ENCODE measurements at regions of chr20 and their contacts with region 1.

Region 1: GRCh38 chr20:44609511-44610312 is 27.3 kb downstream of the PKIG start:
- DNase-seq: peak; percentile 87
- H3K4me3 Mint-ChIP-seq: peak overlapping the region; percentile 31
- H3K27ac Mint-ChIP-seq: peak overlapping the region; percentile 96
- H3K4me1 Mint-ChIP-seq: peaks cover 24% of the 10 kb centered on the region
- H3K27me3 Mint-ChIP-seq: no peaks in the 10 kb centered on the region

Region 2: DNA sequence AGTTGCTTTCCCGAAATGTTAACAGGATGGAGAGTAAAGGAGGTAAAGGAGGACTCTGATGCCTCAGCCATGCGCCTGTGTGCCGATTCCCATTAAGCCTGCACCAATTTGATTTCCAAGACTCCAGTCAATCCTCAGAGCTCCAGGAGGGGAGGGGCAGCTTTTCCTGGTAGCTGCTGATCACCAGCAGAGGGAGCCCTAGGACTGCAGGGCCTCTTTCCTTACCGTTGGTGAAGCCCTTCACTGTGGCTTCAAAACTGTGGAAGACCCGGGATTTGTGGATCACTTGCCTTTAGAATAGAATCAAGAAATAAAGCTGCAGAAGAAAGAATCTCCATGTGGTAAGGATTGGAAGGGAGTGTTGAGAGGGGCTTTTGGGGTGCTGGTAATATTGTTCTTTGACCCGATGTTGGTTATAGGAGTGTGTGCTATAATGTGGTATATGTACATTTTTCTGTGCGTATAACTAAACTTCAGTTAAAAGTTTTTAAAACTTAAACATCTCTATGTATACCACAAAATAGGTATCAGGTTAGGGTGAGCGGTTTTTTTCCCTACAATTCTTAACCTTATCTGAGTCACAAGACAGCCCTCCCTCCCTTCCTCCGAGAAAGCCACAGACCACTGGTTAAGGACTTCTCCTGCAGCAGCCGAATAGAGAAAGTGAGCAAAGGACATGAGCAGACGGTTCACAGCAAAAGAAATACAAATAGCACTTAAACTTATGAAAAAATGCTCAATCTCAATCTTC is 392.2 kb before region 1 on chr20:
- CTCF ChIA-PET with region 1: interaction called, 21 read pairs
- DNase-seq: peak; percentile 82
- H3K4me3 Mint-ChIP-seq: peak overlapping the region; percentile 72
- H3K27ac Mint-ChIP-seq: peak overlapping the region; percentile 89
- H3K4me1 Mint-ChIP-seq: peaks cover 58% of the 10 kb centered on the region
- H3K27me3 Mint-ChIP-seq: no peaks in the 10 kb centered on the region

Region 3: DNA sequence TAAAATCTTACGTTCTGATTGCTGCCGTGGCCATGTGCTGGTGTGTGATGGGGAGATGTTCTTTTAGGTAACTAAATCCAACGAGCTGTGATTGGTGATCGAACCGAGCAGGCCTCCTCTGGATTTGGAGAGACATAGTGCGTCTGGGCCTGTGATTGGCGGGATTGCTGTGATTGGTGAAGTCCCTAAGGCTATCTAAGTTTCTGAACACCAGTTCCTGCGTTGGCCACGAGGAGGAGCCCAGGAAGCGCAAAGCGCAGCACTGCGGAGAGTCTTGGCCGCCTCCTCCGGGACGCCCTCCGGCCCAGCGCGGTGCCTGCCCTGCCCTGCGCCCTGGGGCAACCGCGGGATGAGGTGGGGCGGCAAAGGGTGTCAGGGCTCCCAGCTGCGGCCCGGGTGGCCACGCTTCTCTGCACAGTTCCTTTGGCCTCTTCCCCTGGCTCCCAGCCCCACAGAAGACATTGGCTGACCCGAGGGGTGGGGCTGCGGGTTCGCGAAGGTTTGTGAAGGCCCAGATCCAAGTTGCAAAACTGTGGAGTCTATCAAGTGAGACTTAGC is 221.2 kb before region 1 on chr20:
- CTCF ChIA-PET with region 1: interaction called, 37 read pairs
- DNase-seq: peak; percentile 83
- H3K4me3 Mint-ChIP-seq: no peak overlapping the region
- H3K27ac Mint-ChIP-seq: no peak overlapping the region
- H3K4me1 Mint-ChIP-seq: peaks cover 8% of the 10 kb centered on the region
- H3K27me3 Mint-ChIP-seq: peaks cover 25% of the 10 kb centered on the region

Region 4: DNA sequence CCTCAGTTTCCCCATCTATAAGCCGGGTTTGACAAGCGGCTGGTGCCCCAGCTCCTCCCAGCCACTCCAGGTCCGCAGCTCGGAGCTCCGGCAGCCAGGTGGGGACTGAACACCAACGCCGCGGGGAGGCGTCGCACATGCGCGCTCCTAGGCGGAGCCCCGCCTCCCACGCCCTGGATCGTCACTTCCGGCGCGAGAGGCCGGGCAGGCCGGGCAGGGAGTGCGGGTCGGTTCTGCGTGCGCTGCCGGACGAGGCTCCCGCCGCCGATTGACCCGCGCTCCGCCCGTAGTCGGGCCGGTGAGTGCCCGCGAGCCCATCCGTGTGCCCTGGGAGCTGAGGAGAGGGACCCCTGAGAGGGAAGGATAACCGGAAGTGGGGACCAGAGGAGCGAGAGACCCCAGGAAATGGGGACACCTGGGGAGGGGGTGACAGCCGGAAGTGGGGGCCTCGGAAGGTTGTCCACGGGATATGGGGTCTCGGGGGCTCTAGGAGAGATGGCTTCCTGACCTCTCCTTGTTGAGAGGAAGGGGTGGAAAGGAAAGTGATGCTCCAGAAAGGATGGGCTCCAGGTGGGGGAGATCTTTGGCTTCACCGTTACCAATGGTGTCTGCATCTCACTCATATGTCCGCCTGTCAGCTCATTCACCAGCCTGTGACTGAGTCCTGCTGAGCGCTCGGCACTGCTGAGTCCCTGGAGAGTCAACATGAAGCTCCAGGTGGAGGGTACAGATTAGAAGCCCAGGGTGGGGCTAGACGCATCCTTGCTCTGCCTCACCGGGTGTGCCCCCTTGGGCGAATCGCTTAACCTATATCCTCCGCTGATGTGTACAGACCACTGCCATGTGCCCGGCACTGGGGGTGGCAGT is 133.8 kb before region 1 on chr20 and contains the start of gene TTPAL:
- CTCF ChIA-PET with region 1: interaction called, 19 read pairs
- DNase-seq: peak; percentile 91
- H3K4me3 Mint-ChIP-seq: peak within 1 kb of the TSS; percentile 92
- H3K27ac Mint-ChIP-seq: peak within 1 kb of the TSS; percentile 89
- H3K4me1 Mint-ChIP-seq: peaks cover 27% of the 10 kb centered on the region
- H3K27me3 Mint-ChIP-seq: peaks cover 13% of the 10 kb centered on the region

Region 5: DNA sequence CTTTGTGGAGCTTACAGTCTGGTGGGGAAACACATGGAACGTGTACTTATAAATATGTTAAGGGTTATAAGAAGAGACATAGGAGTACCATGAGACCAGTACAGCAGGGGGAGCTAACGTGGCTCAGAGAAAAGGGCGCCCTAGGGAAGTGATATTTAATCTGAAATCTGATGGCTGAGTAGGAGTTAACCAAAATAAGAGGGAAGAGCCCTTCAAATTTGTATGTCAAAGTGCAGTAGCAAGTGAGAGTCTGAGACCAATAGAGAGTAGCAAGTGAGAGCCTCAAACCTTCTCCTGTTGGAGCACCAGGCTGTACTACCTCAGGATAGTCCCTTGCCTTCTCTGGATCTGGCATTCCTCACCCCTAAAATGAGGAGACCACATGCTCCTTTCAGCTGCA is 33.4 kb before region 1 on chr20:
- CTCF ChIA-PET with region 1: interaction called, 22 read pairs
- DNase-seq: no peak
- H3K4me3 Mint-ChIP-seq: no peak overlapping the region
- H3K27ac Mint-ChIP-seq: no peak overlapping the region
- H3K4me1 Mint-ChIP-seq: peaks cover 17% of the 10 kb centered on the region
- H3K27me3 Mint-ChIP-seq: peaks cover 3% of the 10 kb centered on the region

Region 6: GRCh38 chr20:44598423-44599305 is 11.0 kb before region 1 on chr20:
- CTCF ChIA-PET with region 1: interaction called, 25 read pairs
- DNase-seq: peak; percentile 36
- H3K4me3 Mint-ChIP-seq: peak overlapping the region; percentile 67
- H3K27ac Mint-ChIP-seq: peak overlapping the region; percentile 74
- H3K4me1 Mint-ChIP-seq: peaks cover 26% of the 10 kb centered on the region
- H3K27me3 Mint-ChIP-seq: no peaks in the 10 kb centered on the region

Region 7: GRCh38 chr20:44683263-44684046 is 73.7 kb after region 1 on chr20:
- CTCF ChIA-PET with region 1: interaction called, 32 read pairs
- DNase-seq: peak; percentile 67
- H3K4me3 Mint-ChIP-seq: no peak overlapping the region
- H3K27ac Mint-ChIP-seq: no peak overlapping the region
- H3K4me1 Mint-ChIP-seq: peaks cover 11% of the 10 kb centered on the region
- H3K27me3 Mint-ChIP-seq: peaks cover 3% of the 10 kb centered on the region